Cardiac septum (tissue), 1 donor: ENCODE measurements at regions of chr2 and their contacts with region 1.

Region 1: DNA sequence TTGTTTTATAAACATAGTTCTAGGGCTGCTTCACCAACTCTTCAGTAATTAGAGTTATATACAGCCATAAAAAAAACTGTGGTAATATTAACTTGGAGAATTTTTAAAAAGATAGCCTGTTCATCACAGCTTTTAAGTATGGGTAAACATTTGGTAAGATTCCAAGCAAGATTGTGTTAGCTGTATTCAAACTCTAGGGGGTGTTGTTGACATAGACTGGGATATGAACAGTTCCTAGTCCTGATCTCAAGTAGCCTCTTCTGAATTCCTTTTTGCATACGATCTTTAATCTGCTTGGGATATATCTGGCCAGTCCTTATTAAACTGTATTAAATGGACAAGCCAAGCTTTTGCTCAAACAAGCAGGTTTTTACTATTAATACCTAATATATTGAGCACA is 13.4 kb downstream of the NOP58 start:
- DNase-seq: no peak

Region 2: DNA sequence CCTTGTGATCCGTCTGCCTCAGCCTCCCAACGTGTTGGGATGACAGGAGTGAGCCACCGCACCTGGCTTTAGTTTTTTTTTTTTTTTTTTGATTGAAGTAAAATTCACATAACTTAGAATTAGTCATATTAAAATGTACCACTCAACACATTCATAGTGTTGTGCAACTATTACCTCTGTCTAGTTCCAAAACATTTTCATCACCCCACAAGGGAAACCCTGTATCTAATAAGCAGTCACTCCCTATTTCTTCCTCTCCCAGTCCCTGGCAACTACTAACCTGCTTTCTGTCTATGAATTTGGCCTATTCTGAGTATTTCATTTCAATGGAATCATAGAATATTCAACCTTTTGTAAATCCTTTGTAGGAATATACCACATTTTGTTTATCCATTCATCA is 232.0 kb after region 1 on chr2:
- intact Hi-C with region 1: no loop called
- DNase-seq: no peak

Region 3: GRCh38 chr2:202529389-202529788 is 250.4 kb after region 1 on chr2:
- intact Hi-C with region 1: loop called (anchors 10 kb)
- DNase-seq: no peak

Region 4: GRCh38 chr2:202750763-202751427 is 472.0 kb after region 1 on chr2:
- intact Hi-C with region 1: no loop called
- DNase-seq: no peak